Activated CD4-positive, alpha-beta T cell treated with anti-CD3 and anti-CD28 coated beads for 36 hours (primary cell): ENCODE measurements at regions of chr16 and their contacts with region 1.

Region 1: DNA sequence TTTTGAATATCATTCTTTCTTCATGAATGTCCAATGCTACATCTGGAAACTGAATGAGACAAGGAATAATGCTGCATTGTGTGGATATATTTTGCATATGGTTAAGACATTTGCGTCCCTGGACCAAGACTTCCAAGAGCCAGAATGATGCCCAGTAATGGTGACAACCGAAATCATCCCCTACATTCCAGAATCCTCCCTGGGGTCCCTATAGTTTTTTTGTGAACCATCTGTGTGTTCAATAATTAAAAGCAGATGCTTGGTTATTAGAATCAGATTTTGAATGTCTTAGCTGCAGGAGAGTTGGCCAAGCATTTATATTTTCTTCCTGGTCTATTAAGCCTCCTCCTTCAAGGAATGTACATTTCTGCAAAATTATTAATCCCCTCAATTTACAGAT is 426.7 kb upstream of the CDH8 start:
- DNase-seq: no peak
- ATAC-seq: no peak
- H3K4me3 Mint-ChIP-seq: no peak overlapping the region
- H3K27ac Mint-ChIP-seq: no peak overlapping the region
- H3K4me1 Mint-ChIP-seq: no peaks in the 10 kb centered on the region
- H3K27me3 Mint-ChIP-seq: no peaks in the 10 kb centered on the region

Region 2: GRCh38 chr16:62392698-62393097 is 70.3 kb before region 1 on chr16:
- CTCF ChIA-PET with region 1: no interaction called
- POLR2A ChIA-PET with region 1: no interaction called
- intact Hi-C with region 1: loop called in 1 of 2 experiments (anchors 2 kb)
- DNase-seq: no peak
- ATAC-seq: no peak
- H3K4me3 Mint-ChIP-seq: no peak overlapping the region
- H3K27ac Mint-ChIP-seq: no peak overlapping the region
- H3K4me1 Mint-ChIP-seq: no peaks in the 10 kb centered on the region
- H3K27me3 Mint-ChIP-seq: no peaks in the 10 kb centered on the region